MCF 10A (cell line): ENCODE measurements at regions of chr1 and their contacts with region 1.

Region 1: GRCh38 chr1:17439250-17440073 is at the start of gene RCC2:
- DNase-seq: peak; percentile 71
- H3K4me3 Mint-ChIP-seq: peak within 1 kb of the TSS; percentile 93
- H3K27ac Mint-ChIP-seq: peak within 1 kb of the TSS; percentile 89
- H3K4me1 Mint-ChIP-seq: peaks cover 35% of the 10 kb centered on the region
- H3K27me3 Mint-ChIP-seq: no peaks in the 10 kb centered on the region
- CTCF ChIP-seq: peak; percentile 9
- total RNA-seq, gene RCC2: 89.1 and 107 TPM in 2 replicates

Region 2: GRCh38 chr1:17403104-17403503 is 36.4 kb before region 1 on chr1:
- CTCF ChIA-PET with region 1: no interaction called
- POLR2A ChIA-PET with region 1: no interaction called
- intact Hi-C with region 1: no loop called
- DNase-seq: peak; percentile 82
- H3K4me3 Mint-ChIP-seq: no peak overlapping the region
- H3K27ac Mint-ChIP-seq: no peak overlapping the region
- H3K4me1 Mint-ChIP-seq: peaks cover 10% of the 10 kb centered on the region
- H3K27me3 Mint-ChIP-seq: no peaks in the 10 kb centered on the region
- CTCF ChIP-seq: no peak

Region 3: GRCh38 chr1:17451731-17452130 is 12.3 kb after region 1 on chr1:
- CTCF ChIA-PET with region 1: interaction called, 8 read pairs
- POLR2A ChIA-PET with region 1: interaction called, 12 read pairs
- intact Hi-C with region 1: no loop called
- DNase-seq: no peak
- H3K4me3 Mint-ChIP-seq: no peak overlapping the region
- H3K27ac Mint-ChIP-seq: no peak overlapping the region
- H3K4me1 Mint-ChIP-seq: no peaks in the 10 kb centered on the region
- H3K27me3 Mint-ChIP-seq: no peaks in the 10 kb centered on the region
- CTCF ChIP-seq: no peak

Region 4: GRCh38 chr1:17460245-17460644 is 20.8 kb after region 1 on chr1:
- CTCF ChIA-PET with region 1: interaction called, 7 read pairs
- POLR2A ChIA-PET with region 1: interaction called, 114 read pairs
- intact Hi-C with region 1: loop called (anchors 1 kb)
- DNase-seq: peak; percentile 95
- H3K4me3 Mint-ChIP-seq: peak overlapping the region; percentile 35
- H3K27ac Mint-ChIP-seq: peak overlapping the region; percentile 73
- H3K4me1 Mint-ChIP-seq: peaks cover 13% of the 10 kb centered on the region
- H3K27me3 Mint-ChIP-seq: no peaks in the 10 kb centered on the region
- CTCF ChIP-seq: no peak

Region 5: DNA sequence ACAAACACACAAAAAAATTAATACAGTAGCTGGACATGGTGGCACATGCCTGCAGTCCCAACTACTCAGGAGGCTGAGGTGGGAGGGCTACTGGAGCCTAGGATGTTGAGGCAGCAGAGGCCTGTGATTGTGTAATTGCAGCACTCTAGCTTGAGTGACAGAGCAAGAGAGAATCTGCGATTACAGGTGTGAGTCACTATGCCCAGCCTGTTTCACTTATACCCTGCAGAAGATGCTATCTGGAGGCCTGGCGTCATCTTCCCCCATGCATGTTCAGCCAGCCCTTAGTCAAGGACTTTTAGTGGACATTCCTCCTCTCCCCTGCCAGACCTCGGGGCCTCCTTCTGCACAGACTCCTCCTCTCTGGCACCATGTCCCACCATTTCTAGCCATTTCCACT is 36.3 kb after region 1 on chr1:
- CTCF ChIA-PET with region 1: interaction called, 7 read pairs
- POLR2A ChIA-PET with region 1: interaction called, 75 read pairs
- intact Hi-C with region 1: loop called (anchors 1 kb)
- DNase-seq: peak; percentile 89
- H3K4me3 Mint-ChIP-seq: no peak overlapping the region
- H3K27ac Mint-ChIP-seq: no peak overlapping the region
- H3K4me1 Mint-ChIP-seq: peaks cover 7% of the 10 kb centered on the region
- H3K27me3 Mint-ChIP-seq: no peaks in the 10 kb centered on the region
- CTCF ChIP-seq: no peak

Region 6: GRCh38 chr1:17861685-17862084 is 422.2 kb after region 1 on chr1:
- CTCF ChIA-PET with region 1: no interaction called
- POLR2A ChIA-PET with region 1: no interaction called
- intact Hi-C with region 1: no loop called
- DNase-seq: no peak
- H3K4me3 Mint-ChIP-seq: no peak overlapping the region
- H3K27ac Mint-ChIP-seq: no peak overlapping the region
- H3K4me1 Mint-ChIP-seq: peaks cover 9% of the 10 kb centered on the region
- H3K27me3 Mint-ChIP-seq: no peaks in the 10 kb centered on the region
- CTCF ChIP-seq: no peak

Region 7: DNA sequence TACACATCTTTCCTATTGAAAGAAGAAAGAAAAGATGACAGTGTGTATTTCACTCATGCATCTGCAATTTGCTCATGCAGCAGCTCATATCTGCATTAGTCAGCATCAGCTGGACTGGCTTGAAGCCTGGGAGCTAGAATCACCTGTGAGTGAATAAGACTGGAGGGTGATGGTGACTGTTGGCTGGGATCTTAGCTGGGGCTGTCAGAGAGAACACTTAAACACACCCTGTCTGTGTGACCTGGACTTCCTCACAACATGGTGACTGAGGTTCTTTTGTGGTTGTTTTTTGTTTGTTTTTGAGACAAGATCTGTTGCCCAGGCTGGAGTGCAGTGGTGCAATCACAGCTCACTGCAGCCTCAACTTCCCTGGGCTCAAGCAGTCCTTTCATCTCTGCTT is 1066.2 kb after region 1 on chr1:
- CTCF ChIA-PET with region 1: no interaction called
- POLR2A ChIA-PET with region 1: no interaction called
- intact Hi-C with region 1: no loop called
- DNase-seq: no peak
- H3K4me3 Mint-ChIP-seq: no peak overlapping the region
- H3K27ac Mint-ChIP-seq: no peak overlapping the region
- H3K4me1 Mint-ChIP-seq: no peaks in the 10 kb centered on the region
- H3K27me3 Mint-ChIP-seq: peaks cover 6% of the 10 kb centered on the region
- CTCF ChIP-seq: no peak